Motor neuron (in vitro differentiated cells): ENCODE measurements at regions of chr4 and their contacts with region 1.

Region 1: DNA sequence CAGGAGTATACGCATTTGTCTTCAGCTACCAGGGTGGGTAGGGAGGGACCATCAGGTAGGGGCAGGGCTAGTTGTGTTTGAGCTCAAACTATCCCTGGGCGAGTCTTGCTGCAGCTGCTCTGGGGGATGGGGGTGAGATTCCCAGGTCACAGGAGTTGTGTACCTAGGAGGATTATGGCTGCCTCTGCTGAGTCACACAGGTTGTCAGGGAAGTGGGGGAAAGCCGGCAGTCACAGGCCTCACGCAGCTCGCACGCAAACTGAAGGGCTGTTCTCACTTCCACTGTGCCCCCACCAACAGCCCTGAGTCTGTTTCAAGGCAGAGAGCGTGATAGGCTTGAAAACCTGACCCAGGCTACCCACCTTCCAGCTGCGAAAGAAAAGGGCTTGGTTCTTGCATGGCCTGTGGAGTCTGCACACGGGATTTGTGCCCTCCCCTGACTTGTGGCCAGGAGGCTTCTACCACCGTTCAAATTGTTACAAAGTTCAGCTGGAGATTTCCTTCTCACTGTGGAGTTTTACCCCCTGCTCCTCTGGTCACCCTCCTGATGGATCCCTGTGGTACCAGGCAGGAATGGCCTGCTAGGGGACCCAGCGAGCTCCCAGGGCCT is 63.8 kb downstream of the ARFIP1 start:
- ATAC-seq: no peak
- H3K4me3 ChIP-seq: no peak overlapping the region
- H3K27ac ChIP-seq: no peak overlapping the region
- H3K4me1 ChIP-seq: no peaks in the 10 kb centered on the region

Region 2: GRCh38 chr4:151468715-151469696 is 1374.6 kb before region 1 on chr4:
- in situ Hi-C with region 1: no loop called
- ATAC-seq: no peak
- H3K4me3 ChIP-seq: no peak overlapping the region
- H3K27ac ChIP-seq: no peak overlapping the region
- H3K4me1 ChIP-seq: no peaks in the 10 kb centered on the region

Region 3: GRCh38 chr4:153060196-153060595 is 216.6 kb after region 1 on chr4:
- in situ Hi-C with region 1: no loop called
- ATAC-seq: no peak
- H3K4me3 ChIP-seq: no peak overlapping the region
- H3K27ac ChIP-seq: no peak overlapping the region
- H3K4me1 ChIP-seq: no peaks in the 10 kb centered on the region

Region 4: GRCh38 chr4:153083447-153083947 is 239.9 kb after region 1 on chr4:
- in situ Hi-C with region 1: loop called in 2 of 9 experiments (anchors 25 kb)
- ATAC-seq: peak; percentile 83 to 96 (median 88)
- H3K4me3 ChIP-seq: peak overlapping the region in 4 of 5 donors; percentile 6 to 14 (median 10)
- H3K27ac ChIP-seq: peak overlapping the region; percentile 79 to 94
- H3K4me1 ChIP-seq: peaks cover 38 to 49% of the 10 kb centered on the region in 2 donors